ENCODE measurements at regions of chr19 and their contacts with region 1.

Region 1: DNA sequence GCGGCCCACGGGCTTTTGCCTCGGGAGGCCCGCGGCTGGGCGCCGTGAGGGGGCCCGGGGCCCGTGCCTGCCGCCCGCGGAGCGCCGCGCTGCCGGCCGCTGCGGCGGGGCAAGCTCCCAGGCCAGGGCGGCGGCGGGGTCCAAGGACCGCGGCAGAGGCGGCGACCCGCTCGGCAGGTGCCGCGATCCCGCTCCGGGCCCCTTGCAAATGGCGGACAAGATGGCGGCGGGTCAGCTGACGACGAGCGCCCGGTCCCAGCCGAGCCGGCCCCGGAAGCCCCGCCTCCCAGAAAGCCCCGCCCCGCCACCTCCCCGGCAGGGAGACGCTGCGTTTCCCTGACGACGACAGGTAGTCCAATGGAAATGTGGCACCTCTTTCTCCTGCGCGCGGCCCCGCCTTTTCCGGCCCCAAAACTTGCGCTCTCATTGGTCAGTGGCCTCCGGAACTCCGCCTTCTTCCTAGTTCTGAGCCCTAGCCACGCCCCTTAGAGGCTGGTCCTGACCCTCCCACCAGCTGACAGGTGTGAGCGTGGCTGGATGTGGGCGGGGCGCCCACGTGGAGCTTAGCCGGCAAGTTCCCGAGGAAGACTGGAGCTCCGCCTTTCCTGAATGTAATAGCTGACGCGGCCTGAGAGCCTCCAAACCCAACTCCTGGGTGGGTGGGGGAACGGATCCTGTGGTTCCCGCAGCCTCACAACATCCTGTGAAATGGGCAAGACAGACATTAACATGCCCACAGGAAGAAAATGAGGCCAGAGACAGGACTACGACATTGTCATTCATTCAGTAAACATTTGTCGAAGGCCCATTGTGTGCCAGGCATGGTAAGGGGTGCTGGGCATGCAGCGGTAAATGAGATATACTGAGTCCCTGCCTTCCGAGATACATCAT is at the start of gene AP3D1:
- DNase-seq: peak; percentile 100
- ATAC-seq: peak; percentile 91
- H3K4me3 ChIP-seq: peak within 1 kb of the TSS; percentile 64 to 95 (median 82)
- H3K4me3 Mint-ChIP-seq: peak within 1 kb of the TSS; percentile 83
- H3K27ac ChIP-seq: peak within 1 kb of the TSS; percentile 18 to 90
- H3K27ac Mint-ChIP-seq: peak within 1 kb of the TSS; percentile 90
- H3K4me1 ChIP-seq: peaks cover 18 to 36% of the 10 kb centered on the region in 2 donors
- H3K4me1 Mint-ChIP-seq: peaks cover 37% of the 10 kb centered on the region
- H3K27me3 ChIP-seq: no peaks in the 10 kb centered on the region
- H3K27me3 Mint-ChIP-seq: no peaks in the 10 kb centered on the region
- CTCF ChIP-seq: no peak
- total RNA-seq, gene AP3D1: 96.4 and 108 TPM in 2 replicates

Region 2: GRCh38 chr19:1942078-1942933 is 209.3 kb before region 1 on chr19:
- CTCF ChIA-PET with region 1: no interaction called
- POLR2A ChIA-PET with region 1: interaction called, 3 read pairs
- intact Hi-C with region 1: loop called (anchors 1 kb)
- DNase-seq: peak; percentile 87
- ATAC-seq: peak; percentile 53
- H3K4me3 ChIP-seq: peak overlapping the region; percentile 71 to 94 (median 83)
- H3K4me3 Mint-ChIP-seq: peak overlapping the region; percentile 98
- H3K27ac ChIP-seq: peak overlapping the region; percentile 90 to 99
- H3K27ac Mint-ChIP-seq: peak overlapping the region; percentile 98
- H3K4me1 ChIP-seq: peaks cover 31 to 47% of the 10 kb centered on the region in 2 donors
- H3K4me1 Mint-ChIP-seq: peaks cover 39% of the 10 kb centered on the region
- H3K27me3 ChIP-seq: no peaks in the 10 kb centered on the region
- H3K27me3 Mint-ChIP-seq: no peaks in the 10 kb centered on the region
- CTCF ChIP-seq: no peak

Region 3: GRCh38 chr19:2050991-2051772 is 100.4 kb before region 1 on chr19 and contains the start of gene MKNK2:
- CTCF ChIA-PET with region 1: interaction called, 5 read pairs
- POLR2A ChIA-PET with region 1: no interaction called
- intact Hi-C with region 1: loop called (anchors 1 kb)
- DNase-seq: peak; percentile 97
- ATAC-seq: peak; percentile 65
- H3K4me3 ChIP-seq: peak within 1 kb of the TSS; percentile 62 to 98 (median 94)
- H3K4me3 Mint-ChIP-seq: peak within 1 kb of the TSS; percentile 99
- H3K27ac ChIP-seq: peak within 1 kb of the TSS; percentile 99
- H3K27ac Mint-ChIP-seq: peak within 1 kb of the TSS; percentile 98
- H3K4me1 ChIP-seq: peaks cover 79 to 85% of the 10 kb centered on the region in 2 donors
- H3K4me1 Mint-ChIP-seq: peaks cover 67% of the 10 kb centered on the region
- H3K27me3 ChIP-seq: no peaks in the 10 kb centered on the region
- H3K27me3 Mint-ChIP-seq: no peaks in the 10 kb centered on the region
- CTCF ChIP-seq: peak; percentile 45
- total RNA-seq, gene MKNK2: 777 and 813 TPM in 2 replicates

Region 4: GRCh38 chr19:2199215-2199614 is 47.6 kb after region 1 on chr19:
- CTCF ChIA-PET with region 1: interaction called, 10 read pairs
- POLR2A ChIA-PET with region 1: no interaction called
- intact Hi-C with region 1: no loop called
- DNase-seq: no peak
- ATAC-seq: peak; percentile 33
- H3K4me3 ChIP-seq: no peak overlapping the region
- H3K4me3 Mint-ChIP-seq: no peak overlapping the region
- H3K27ac ChIP-seq: no peak overlapping the region
- H3K27ac Mint-ChIP-seq: peak overlapping the region; percentile 20
- H3K4me1 ChIP-seq: no peaks in the 10 kb centered on the region
- H3K4me1 Mint-ChIP-seq: peaks cover 6% of the 10 kb centered on the region
- H3K27me3 ChIP-seq: no peaks in the 10 kb centered on the region
- H3K27me3 Mint-ChIP-seq: no peaks in the 10 kb centered on the region
- CTCF ChIP-seq: peak; percentile 36

Region 5: GRCh38 chr19:2236314-2237050 is 84.9 kb after region 1 on chr19 and contains the starts of genes PLEKHJ1 and SF3A2:
- CTCF ChIA-PET with region 1: interaction called, 10 read pairs
- POLR2A ChIA-PET with region 1: interaction called, 3 read pairs
- intact Hi-C with region 1: loop called (anchors 1 kb)
- DNase-seq: peak; percentile 99
- ATAC-seq: peak; percentile 83
- H3K4me3 ChIP-seq: peak within 1 kb of the TSS; percentile 19 to 94 (median 70)
- H3K4me3 Mint-ChIP-seq: peak within 1 kb of the TSS; percentile 93
- H3K27ac ChIP-seq: peak within 1 kb of the TSS; percentile 97 to 99
- H3K27ac Mint-ChIP-seq: peak within 1 kb of the TSS; percentile 98
- H3K4me1 ChIP-seq: peaks cover 46 to 66% of the 10 kb centered on the region in 2 donors
- H3K4me1 Mint-ChIP-seq: peaks cover 65% of the 10 kb centered on the region
- H3K27me3 ChIP-seq: no peaks in the 10 kb centered on the region
- H3K27me3 Mint-ChIP-seq: no peaks in the 10 kb centered on the region
- CTCF ChIP-seq: peak; percentile 98
- total RNA-seq, gene PLEKHJ1: 82.4 and 86.7 TPM in 2 replicates
- total RNA-seq, gene SF3A2: 129 and 140 TPM in 2 replicates

Region 6: GRCh38 chr19:2315818-2316353 is 164.3 kb after region 1 on chr19:
- CTCF ChIA-PET with region 1: interaction called, 8 read pairs
- POLR2A ChIA-PET with region 1: no interaction called
- intact Hi-C with region 1: loop called (anchors 10 kb)
- DNase-seq: peak; percentile 74
- ATAC-seq: peak; percentile 75
- H3K4me3 ChIP-seq: peak overlapping the region in 1 of 5 experiments; percentile 19
- H3K4me3 Mint-ChIP-seq: peak overlapping the region; percentile 74
- H3K27ac ChIP-seq: peak overlapping the region; percentile 62 to 75
- H3K27ac Mint-ChIP-seq: peak overlapping the region; percentile 93
- H3K4me1 ChIP-seq: peaks cover 46 to 55% of the 10 kb centered on the region in 2 donors
- H3K4me1 Mint-ChIP-seq: peaks cover 51% of the 10 kb centered on the region
- H3K27me3 ChIP-seq: peaks cover 0 to 10% (median 3%) of the 10 kb centered on the region in 4 experiments
- H3K27me3 Mint-ChIP-seq: no peaks in the 10 kb centered on the region
- CTCF ChIP-seq: no peak

Region 7: GRCh38 chr19:2427429-2428320 is 276.1 kb after region 1 on chr19 and contains the start of gene TIMM13:
- CTCF ChIA-PET with region 1: interaction called, 3 read pairs
- POLR2A ChIA-PET with region 1: no interaction called
- intact Hi-C with region 1: loop called (anchors 1 kb)
- DNase-seq: peak; percentile 99
- ATAC-seq: peak; percentile 93
- H3K4me3 ChIP-seq: peak within 1 kb of the TSS; percentile 57 to 90 (median 74)
- H3K4me3 Mint-ChIP-seq: peak within 1 kb of the TSS; percentile 96
- H3K27ac ChIP-seq: peak within 1 kb of the TSS; percentile 75 to 80
- H3K27ac Mint-ChIP-seq: peak within 1 kb of the TSS; percentile 98
- H3K4me1 ChIP-seq: peaks cover 15 to 21% of the 10 kb centered on the region in 2 donors
- H3K4me1 Mint-ChIP-seq: peaks cover 13% of the 10 kb centered on the region
- H3K27me3 ChIP-seq: no peaks in the 10 kb centered on the region
- H3K27me3 Mint-ChIP-seq: no peaks in the 10 kb centered on the region
- CTCF ChIP-seq: no peak
- total RNA-seq, gene TIMM13: 31.9 and 32.5 TPM in 2 replicates